ENCODE measurements at regions of chr11 and their contacts with region 1.

Region 1: DNA sequence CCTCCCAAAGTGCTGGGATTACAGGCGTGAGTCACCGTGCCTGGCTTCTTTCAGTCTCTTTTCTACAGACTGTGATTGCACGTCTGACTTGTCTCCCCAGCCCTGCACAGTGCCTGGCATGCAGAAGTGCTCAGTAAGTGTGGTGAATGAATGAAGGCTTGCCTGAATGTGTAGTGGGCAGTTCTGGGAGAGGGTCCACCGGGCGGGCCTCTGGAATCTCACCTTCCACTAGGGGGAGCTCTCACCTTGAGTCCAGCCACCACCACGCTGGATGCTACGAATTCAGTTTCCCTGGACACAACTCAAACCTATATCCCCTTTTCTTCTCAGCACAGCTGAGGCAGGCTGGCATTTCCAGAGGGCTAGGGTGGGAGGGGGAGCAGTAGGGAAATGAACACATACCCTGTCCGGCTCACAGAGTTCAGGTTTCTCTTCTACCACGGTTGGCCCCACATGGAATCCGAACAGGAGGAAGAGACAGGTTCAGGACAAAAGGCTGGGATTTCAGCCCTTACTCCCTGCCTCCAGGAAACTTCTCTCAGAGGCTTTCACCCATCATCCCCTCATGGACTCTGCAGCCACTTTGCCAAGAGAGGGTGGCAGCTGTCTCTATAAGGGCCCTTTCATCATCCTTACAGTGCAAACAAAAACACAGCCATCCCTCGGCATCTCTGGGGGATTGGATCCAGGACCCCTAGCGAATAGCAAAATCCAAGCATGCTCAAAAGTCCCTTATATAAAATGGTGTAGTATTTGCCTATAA is 86.8 kb downstream of the NECTIN1 start:
- DNase-seq: peak; percentile 15
- H3K4me3 ChIP-seq: no peak overlapping the region
- H3K27ac ChIP-seq: no peak overlapping the region
- H3K4me1 ChIP-seq: no peaks in the 10 kb centered on the region
- H3K27me3 ChIP-seq: no peaks in the 10 kb centered on the region
- CTCF ChIP-seq: peak; percentile 59 to 84

Region 2: GRCh38 chr11:119417726-119418540 is 224.2 kb before region 1 on chr11:
- CTCF ChIA-PET with region 1: no interaction called
- dilution Hi-C with region 1: no loop called
- in situ Hi-C with region 1: no loop called
- intact Hi-C with region 1: no loop called
- DNase-seq: peak; percentile 81
- H3K4me3 ChIP-seq: peak overlapping the region in 1 of 3 experiments; percentile 4
- H3K27ac ChIP-seq: peak overlapping the region; percentile 48
- H3K4me1 ChIP-seq: peaks cover 36% of the 10 kb centered on the region
- H3K27me3 ChIP-seq: no peaks in the 10 kb centered on the region
- CTCF ChIP-seq: no peak

Region 3: DNA sequence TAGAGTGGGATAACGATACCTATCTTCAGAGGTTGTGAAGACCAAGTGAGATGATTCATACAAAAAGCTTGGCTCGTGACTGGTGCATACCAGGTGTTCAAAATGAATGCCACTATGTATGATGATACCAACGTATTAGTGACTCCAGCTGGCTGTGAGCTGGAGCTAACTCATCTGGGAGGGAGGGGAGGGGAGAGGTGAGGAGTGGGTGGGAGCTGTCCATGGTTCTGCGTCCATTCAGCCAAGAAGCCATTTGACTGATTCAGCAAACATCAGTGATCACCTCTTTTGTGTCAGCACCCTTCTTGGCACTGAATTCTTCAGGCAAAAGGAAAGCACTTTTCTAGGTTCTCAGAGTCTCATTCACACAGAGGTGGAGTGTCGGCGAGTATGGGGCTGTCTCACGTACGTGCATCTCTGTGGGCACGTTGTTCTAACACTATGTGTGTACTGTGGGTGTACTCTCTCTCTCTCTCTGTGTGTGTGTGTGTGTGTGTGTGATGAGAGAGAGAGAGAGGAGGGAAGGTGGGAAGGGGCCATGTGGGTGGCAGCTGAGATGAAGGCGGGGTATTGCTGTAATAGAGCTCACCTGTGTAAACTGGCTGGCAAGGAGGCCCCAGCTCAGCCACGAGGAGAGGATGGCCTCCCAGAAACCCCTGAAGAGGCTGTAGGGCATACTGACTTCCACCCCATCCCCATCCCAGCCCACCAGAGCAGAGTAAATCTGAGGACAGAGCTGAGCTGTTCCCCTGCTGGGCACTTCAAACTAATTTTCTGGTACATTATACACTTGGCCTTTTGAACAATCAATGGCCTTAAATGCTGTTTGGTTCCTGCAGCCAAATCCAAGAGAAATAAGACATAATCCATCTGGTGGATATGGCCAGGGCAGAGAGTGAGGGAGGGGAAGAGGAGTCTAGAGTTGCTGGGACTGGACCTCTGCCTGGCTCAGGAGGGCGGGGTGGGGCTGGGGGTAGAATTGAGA is 123.1 kb before region 1 on chr11:
- CTCF ChIA-PET with region 1: no interaction called
- dilution Hi-C with region 1: no loop called
- in situ Hi-C with region 1: no loop called
- intact Hi-C with region 1: no loop called
- DNase-seq: peak; percentile 54
- H3K4me3 ChIP-seq: no peak overlapping the region
- H3K27ac ChIP-seq: no peak overlapping the region
- H3K4me1 ChIP-seq: no peaks in the 10 kb centered on the region
- H3K27me3 ChIP-seq: no peaks in the 10 kb centered on the region
- CTCF ChIP-seq: no peak

Region 4: DNA sequence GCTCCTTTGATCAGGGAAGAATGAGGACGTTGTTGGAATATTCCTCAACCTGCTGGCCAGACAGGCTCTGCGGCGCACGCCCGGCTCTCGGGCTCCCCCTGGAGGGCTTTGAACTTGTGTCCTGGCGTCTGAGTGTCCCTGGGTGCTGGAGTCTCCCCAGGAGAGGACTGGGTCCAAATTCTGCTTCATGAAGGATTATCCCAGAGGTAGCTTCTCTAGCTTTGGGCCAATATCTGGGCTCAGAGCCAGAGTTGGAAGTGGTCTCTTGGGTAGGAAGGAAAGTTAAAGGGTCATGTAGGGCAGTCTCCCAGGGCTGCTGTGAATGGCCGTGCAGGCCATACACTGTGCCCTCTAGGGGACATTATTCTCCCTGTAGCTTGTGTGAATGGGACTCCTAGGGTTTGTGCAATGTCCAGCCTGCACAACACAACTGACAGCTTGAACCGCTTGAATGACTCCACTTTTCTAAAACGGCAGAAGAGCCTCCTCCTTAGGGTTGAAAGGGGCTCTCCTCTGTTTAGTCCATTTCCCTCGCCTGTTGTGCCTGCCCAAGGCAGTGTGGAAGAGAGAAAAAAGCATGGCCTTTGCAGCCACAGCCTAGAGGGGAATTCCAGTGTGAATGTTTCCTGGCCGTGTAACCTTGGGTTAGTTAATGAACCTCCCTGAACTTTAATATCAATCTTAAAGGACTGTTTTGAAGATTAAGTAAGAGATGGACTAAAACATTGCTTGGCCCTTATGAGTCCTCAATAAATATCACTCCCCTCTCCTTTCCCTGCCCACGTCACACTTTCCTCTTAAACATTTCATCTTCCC is 108.0 kb before region 1 on chr11:
- CTCF ChIA-PET with region 1: no interaction called
- dilution Hi-C with region 1: no loop called
- in situ Hi-C with region 1: no loop called
- intact Hi-C with region 1: loop called (anchors 10 kb)
- DNase-seq: peak; percentile 57
- H3K4me3 ChIP-seq: no peak overlapping the region
- H3K27ac ChIP-seq: no peak overlapping the region
- H3K4me1 ChIP-seq: no peaks in the 10 kb centered on the region
- H3K27me3 ChIP-seq: peaks cover 1% of the 10 kb centered on the region
- CTCF ChIP-seq: peak; percentile 62 to 95

Region 5: DNA sequence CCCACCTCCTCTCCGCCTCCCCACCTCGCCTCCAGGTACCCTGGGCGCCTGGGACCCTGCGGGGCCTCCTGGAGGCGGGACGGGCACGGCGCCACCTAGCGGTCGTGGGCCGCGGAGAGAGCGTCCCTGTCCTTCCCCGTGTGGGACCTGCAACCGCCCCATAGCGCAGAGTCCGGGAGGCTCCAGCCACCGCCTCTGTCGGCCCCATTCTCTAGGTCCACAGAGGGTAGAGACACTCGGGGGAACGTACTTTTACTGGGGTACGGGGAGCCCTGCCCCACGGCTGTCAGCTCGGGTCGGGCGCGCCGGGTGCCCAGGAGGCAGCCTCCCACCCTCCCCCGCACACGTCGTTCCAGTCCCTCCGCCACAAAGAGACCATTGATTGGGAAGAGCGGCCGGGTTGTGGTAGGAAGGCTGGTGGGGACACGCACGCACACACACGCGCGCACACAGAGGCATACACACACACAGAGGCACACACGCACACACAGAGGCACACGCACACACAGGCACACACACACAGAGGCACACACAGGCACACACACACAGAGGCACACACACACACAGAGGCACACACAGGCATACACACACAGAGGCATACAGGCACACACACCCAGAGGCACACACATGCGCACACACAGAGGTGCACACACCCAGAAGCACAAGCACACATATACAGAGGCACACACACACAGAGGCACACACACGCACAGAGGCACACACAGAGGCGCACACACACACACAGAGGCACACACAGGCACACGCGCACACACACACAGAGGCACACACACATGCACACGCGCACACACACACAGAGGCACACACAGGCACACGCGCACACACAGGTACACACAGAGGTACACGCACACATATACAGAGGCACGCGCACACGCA is 99.5 kb after region 1 on chr11:
- CTCF ChIA-PET with region 1: interaction called, 4 read pairs
- dilution Hi-C with region 1: no loop called
- in situ Hi-C with region 1: no loop called
- intact Hi-C with region 1: loop called (anchors 1 kb)
- DNase-seq: no peak
- H3K4me3 ChIP-seq: peak overlapping the region in 2 of 3 experiments; percentile 25 to 31
- H3K27ac ChIP-seq: no peak overlapping the region
- H3K4me1 ChIP-seq: peaks cover 10% of the 10 kb centered on the region
- H3K27me3 ChIP-seq: peaks cover 2% of the 10 kb centered on the region
- CTCF ChIP-seq: peak; percentile 59 to 84

Region 6: GRCh38 chr11:120013325-120014270 is 371.4 kb after region 1 on chr11:
- CTCF ChIA-PET with region 1: no interaction called
- dilution Hi-C with region 1: no loop called
- in situ Hi-C with region 1: loop called in 1 of 2 experiments (anchors 25 kb)
- intact Hi-C with region 1: loop called (anchors 1 kb)
- DNase-seq: peak; percentile 40
- H3K4me3 ChIP-seq: no peak overlapping the region
- H3K27ac ChIP-seq: no peak overlapping the region
- H3K4me1 ChIP-seq: no peaks in the 10 kb centered on the region
- H3K27me3 ChIP-seq: peaks cover 2% of the 10 kb centered on the region
- CTCF ChIP-seq: peak; percentile 87 to 98